ENCODE measurements at regions of chr4 and their contacts with region 1.

Region 1: GRCh38 chr4:173025131-173025530 is 143.5 kb upstream of the GALNT7 start:
- DNase-seq: peak; percentile 51
- CTCF ChIP-seq: peak; percentile 59

Region 2: DNA sequence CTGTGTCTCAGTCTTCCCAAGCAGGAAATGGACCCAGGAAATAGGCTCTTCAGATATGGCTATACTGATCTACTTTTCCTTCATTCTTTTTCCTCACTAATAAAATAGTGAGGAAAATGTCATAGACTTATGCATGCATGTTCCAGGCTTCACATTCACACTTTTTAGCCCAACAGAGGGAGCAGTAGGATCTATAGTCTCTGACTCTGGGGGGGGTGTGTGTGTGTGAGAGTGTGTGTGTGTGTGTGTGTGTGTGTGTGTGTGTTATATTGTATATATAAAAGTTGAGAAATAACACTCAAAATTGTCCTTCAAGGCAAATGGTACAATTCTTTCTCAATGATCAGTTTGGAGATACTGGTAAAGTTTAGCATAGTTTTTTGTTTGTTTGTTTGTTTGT is 153.8 kb before region 1 on chr4:
- in situ Hi-C with region 1: no loop called
- DNase-seq: no peak
- CTCF ChIP-seq: no peak

Region 3: GRCh38 chr4:173257732-173258717 is 232.9 kb after region 1 on chr4:
- in situ Hi-C with region 1: loop called (anchors 5 kb)
- DNase-seq: peak; percentile 43
- CTCF ChIP-seq: peak; percentile 90